Endothelial cell of umbilical vein (primary cell): ENCODE measurements at regions of chr9 and their contacts with region 1.

Region 1: DNA sequence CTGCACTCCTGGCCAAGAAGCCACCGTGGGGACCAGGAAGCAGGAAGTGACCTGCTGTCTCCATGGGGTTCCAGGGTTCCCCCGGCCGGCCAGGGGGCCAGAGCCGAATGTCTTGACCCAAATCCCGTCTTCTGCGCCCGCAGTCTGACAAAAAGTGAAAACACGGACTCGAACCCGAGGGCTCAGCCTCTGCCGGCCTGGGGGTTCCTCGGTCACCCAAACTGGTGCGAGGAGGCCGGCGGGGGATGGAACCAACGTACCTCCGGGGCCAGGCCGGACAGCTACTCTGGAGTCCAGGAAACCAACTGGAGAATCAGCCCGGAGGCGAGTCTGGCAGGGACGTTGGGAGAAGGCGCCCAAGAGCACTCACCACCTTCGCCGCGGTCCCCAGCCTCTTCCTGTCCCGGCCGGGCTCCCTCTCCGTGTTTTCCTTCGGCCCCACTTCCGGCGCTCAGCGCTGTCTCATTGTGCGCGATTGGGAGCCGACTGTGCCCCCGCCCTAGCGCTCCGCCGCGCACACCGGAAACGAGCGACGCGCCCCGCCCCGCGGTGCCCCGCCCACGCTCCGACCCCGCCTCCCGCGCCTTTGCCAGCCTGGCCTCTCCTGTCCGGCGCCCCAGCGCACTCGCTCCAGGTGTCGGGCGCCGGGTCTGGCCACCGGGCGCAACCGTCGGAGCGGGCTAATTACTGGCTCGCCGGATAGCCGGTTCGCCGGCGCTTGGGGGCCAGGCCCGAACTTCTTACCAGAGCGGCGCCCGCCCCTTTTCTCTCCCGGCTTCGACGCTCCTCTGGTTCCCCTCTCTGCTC is at the start of gene TUT7:
- DNase-seq: peak; percentile 95
- H3K4me3 ChIP-seq: peak within 1 kb of the TSS; percentile 83 to 94 (median 86)
- H3K27ac ChIP-seq: peak within 1 kb of the TSS; percentile 84
- H3K4me1 ChIP-seq: peaks cover 22% of the 10 kb centered on the region
- H3K27me3 ChIP-seq: peaks cover 0 to 3% of the 10 kb centered on the region in 2 experiments
- CTCF ChIP-seq: no peak
- POLR2A ChIP-seq: peak; percentile 82
- total RNA-seq, gene TUT7: 16.7 and 19.0 TPM in 2 replicates

Region 2: GRCh38 chr9:85940832-85941621 is 413.2 kb before region 1 on chr9 and contains the start of gene NAA35:
- CTCF ChIA-PET with region 1: no interaction called
- POLR2A ChIA-PET with region 1: no interaction called
- dilution Hi-C with region 1: no loop called
- intact Hi-C with region 1: loop called (anchors 1 kb)
- DNase-seq: peak; percentile 99
- H3K4me3 ChIP-seq: peak within 1 kb of the TSS; percentile 68 to 94 (median 91)
- H3K27ac ChIP-seq: peak within 1 kb of the TSS; percentile 83
- H3K4me1 ChIP-seq: peaks cover 13% of the 10 kb centered on the region
- H3K27me3 ChIP-seq: no peaks in the 10 kb centered on the region
- CTCF ChIP-seq: no peak
- POLR2A ChIP-seq: no peak
- total RNA-seq, gene NAA35: 22.5 and 23.3 TPM in 2 replicates

Region 3: GRCh38 chr9:86202338-86202882 is 151.8 kb before region 1 on chr9:
- CTCF ChIA-PET with region 1: no interaction called
- POLR2A ChIA-PET with region 1: no interaction called
- dilution Hi-C with region 1: no loop called
- intact Hi-C with region 1: loop called (anchors 10 kb)
- DNase-seq: peak; percentile 54
- H3K4me3 ChIP-seq: no peak overlapping the region
- H3K27ac ChIP-seq: no peak overlapping the region
- H3K4me1 ChIP-seq: no peaks in the 10 kb centered on the region
- H3K27me3 ChIP-seq: peaks cover 0 to 1% of the 10 kb centered on the region in 2 experiments
- CTCF ChIP-seq: peak; percentile 71 to 73
- POLR2A ChIP-seq: no peak

Region 4: DNA sequence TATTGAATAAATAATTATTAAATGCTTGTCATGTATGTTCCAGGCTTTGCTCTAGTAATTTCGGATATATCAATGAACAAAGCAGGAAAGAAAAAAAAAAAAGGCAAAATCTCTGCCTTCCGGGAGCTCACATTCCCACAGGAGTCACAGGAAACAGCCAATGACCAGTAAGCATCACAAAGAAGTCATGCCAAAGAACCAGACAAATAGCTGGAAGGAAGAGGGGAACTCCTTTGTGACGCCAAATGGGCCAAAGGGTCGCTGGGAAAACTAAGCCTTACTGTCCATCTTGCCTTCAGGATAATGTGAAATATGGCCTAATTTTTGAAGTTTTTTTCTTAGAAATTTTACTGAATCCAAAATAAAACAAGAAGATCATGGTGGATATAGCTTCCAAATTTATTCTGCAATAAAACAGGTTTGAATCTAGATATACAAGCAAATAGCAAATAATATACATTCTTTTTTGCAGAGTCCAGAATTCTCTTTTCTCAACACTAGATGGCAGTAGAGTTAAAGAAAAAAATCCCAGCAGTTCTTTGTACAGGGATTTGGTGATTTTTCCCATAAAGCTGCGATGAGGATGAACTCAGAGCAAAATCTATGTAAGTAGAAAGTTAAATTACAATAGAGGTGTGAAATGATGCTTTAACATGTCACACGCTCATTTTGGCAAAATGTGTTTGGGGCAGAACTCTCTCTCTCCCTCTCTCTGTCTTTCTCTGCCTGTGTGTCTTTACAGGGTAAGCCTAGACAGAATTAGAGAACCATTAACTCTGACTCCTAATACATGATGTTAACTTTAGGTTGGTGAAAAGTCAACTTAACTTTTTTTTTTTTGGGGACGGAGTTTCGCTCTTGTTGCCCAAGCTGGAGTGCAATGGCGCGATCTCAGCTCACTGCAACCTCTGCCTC is 60.0 kb after region 1 on chr9:
- CTCF ChIA-PET with region 1: no interaction called
- POLR2A ChIA-PET with region 1: no interaction called
- dilution Hi-C with region 1: no loop called
- intact Hi-C with region 1: loop called (anchors 5 kb)
- DNase-seq: peak; percentile 47
- H3K4me3 ChIP-seq: no peak overlapping the region
- H3K27ac ChIP-seq: no peak overlapping the region
- H3K4me1 ChIP-seq: no peaks in the 10 kb centered on the region
- H3K27me3 ChIP-seq: no peaks in the 10 kb centered on the region
- CTCF ChIP-seq: peak; percentile 30 to 31
- POLR2A ChIP-seq: no peak

Region 5: GRCh38 chr9:87516222-87516925 is 1162.2 kb after region 1 on chr9:
- CTCF ChIA-PET with region 1: no interaction called
- POLR2A ChIA-PET with region 1: no interaction called
- dilution Hi-C with region 1: no loop called
- intact Hi-C with region 1: loop called (anchors 5 kb)
- DNase-seq: peak; percentile 90
- H3K4me3 ChIP-seq: no peak overlapping the region
- H3K27ac ChIP-seq: peak overlapping the region; percentile 64
- H3K4me1 ChIP-seq: peaks cover 52% of the 10 kb centered on the region
- H3K27me3 ChIP-seq: no peaks in the 10 kb centered on the region
- CTCF ChIP-seq: no peak
- POLR2A ChIP-seq: peak; percentile 34